Activated CD4-positive, alpha-beta memory T cell treated with anti-CD3 and anti-CD28 coated beads for 36 hours (primary cell): ENCODE measurements at regions of chr11 and their contacts with region 1.

Region 1: GRCh38 chr11:76207642-76208401 is 1.5 kb upstream of the WNT11 start:
- DNase-seq: peak; percentile 81
- H3K4me3 Mint-ChIP-seq: peak overlapping the region; percentile 66
- H3K27ac Mint-ChIP-seq: no peak overlapping the region
- H3K4me1 Mint-ChIP-seq: peaks cover 14% of the 10 kb centered on the region
- H3K27me3 Mint-ChIP-seq: peaks cover 51% of the 10 kb centered on the region

Region 2: GRCh38 chr11:76193219-76193618 is 14.6 kb before region 1 on chr11:
- CTCF ChIA-PET with region 1: interaction called, 21 read pairs
- POLR2A ChIA-PET with region 1: no interaction called
- intact Hi-C with region 1: no loop called
- DNase-seq: no peak
- H3K4me3 Mint-ChIP-seq: no peak overlapping the region
- H3K27ac Mint-ChIP-seq: no peak overlapping the region
- H3K4me1 Mint-ChIP-seq: no peaks in the 10 kb centered on the region
- H3K27me3 Mint-ChIP-seq: no peaks in the 10 kb centered on the region

Region 3: DNA sequence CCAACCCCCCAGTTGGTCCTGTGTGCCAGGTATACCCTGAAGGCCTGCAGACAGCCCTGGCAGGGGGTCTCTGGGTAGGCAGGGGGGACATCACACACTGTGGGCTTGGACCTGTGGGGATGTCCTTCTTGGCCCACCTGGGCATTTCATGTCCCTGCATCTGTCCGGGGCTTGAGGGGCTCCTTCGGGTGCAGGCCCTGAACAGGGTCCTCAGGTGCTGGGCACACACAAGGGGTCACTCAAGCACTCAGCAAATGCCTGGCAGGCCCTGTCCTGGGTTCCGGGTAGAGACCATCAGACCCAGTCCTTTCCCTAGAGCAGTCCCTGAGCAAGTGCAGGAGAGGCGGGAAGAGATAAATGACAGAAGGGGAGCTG is 68.9 kb after region 1 on chr11:
- CTCF ChIA-PET with region 1: no interaction called
- POLR2A ChIA-PET with region 1: no interaction called
- intact Hi-C with region 1: no loop called
- DNase-seq: no peak
- H3K4me3 Mint-ChIP-seq: no peak overlapping the region
- H3K27ac Mint-ChIP-seq: no peak overlapping the region
- H3K4me1 Mint-ChIP-seq: no peaks in the 10 kb centered on the region
- H3K27me3 Mint-ChIP-seq: no peaks in the 10 kb centered on the region

Region 4: DNA sequence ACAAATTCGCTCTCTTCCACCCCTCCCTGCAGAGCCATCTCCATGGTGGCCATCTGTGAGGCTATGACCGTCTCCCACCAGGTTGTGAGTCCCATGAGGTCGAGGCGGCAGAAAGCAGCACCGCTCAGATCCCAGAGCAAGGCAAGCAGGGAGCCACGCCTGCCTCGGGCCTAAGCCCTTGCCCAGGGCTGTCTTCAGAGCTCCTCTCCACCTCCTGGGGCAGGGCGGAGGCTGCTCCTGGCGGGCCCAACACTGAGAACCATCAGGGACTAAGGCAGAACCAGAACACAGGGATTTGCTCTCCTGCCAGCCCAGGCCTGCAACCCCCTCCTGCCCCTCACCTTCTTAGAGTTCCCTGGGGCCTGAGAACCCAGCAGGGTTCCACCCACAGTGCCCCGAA is 79.4 kb after region 1 on chr11:
- CTCF ChIA-PET with region 1: interaction called, 18 read pairs
- POLR2A ChIA-PET with region 1: no interaction called
- intact Hi-C with region 1: no loop called
- DNase-seq: no peak
- H3K4me3 Mint-ChIP-seq: no peak overlapping the region
- H3K27ac Mint-ChIP-seq: no peak overlapping the region
- H3K4me1 Mint-ChIP-seq: peaks cover 21% of the 10 kb centered on the region
- H3K27me3 Mint-ChIP-seq: no peaks in the 10 kb centered on the region

Region 5: GRCh38 chr11:76318744-76319384 is 111.0 kb after region 1 on chr11:
- CTCF ChIA-PET with region 1: interaction called, 241 read pairs
- POLR2A ChIA-PET with region 1: interaction called, 5 read pairs
- intact Hi-C with region 1: loop called (anchors 1 kb)
- DNase-seq: peak; percentile 88
- H3K4me3 Mint-ChIP-seq: no peak overlapping the region
- H3K27ac Mint-ChIP-seq: no peak overlapping the region
- H3K4me1 Mint-ChIP-seq: peaks cover 15% of the 10 kb centered on the region
- H3K27me3 Mint-ChIP-seq: peaks cover 26% of the 10 kb centered on the region

Region 6: GRCh38 chr11:76380967-76381719 is 173.3 kb after region 1 on chr11 and contains the starts of genes GVQW3 and THAP12:
- CTCF ChIA-PET with region 1: interaction called, 3 read pairs
- POLR2A ChIA-PET with region 1: no interaction called
- intact Hi-C with region 1: loop called (anchors 5 kb)
- DNase-seq: peak; percentile 98
- H3K4me3 Mint-ChIP-seq: peak within 1 kb of the TSS; percentile 87
- H3K27ac Mint-ChIP-seq: peak within 1 kb of the TSS; percentile 89
- H3K4me1 Mint-ChIP-seq: peaks cover 57% of the 10 kb centered on the region
- H3K27me3 Mint-ChIP-seq: no peaks in the 10 kb centered on the region
- total RNA-seq, gene GVQW3: 2.3 to 3.3 TPM
- total RNA-seq, gene THAP12: 46.2 to 49.2 TPM

Region 7: GRCh38 chr11:76469141-76469540 is 261.3 kb after region 1 on chr11:
- CTCF ChIA-PET with region 1: no interaction called
- POLR2A ChIA-PET with region 1: no interaction called
- intact Hi-C with region 1: no loop called
- DNase-seq: no peak
- H3K4me3 Mint-ChIP-seq: no peak overlapping the region
- H3K27ac Mint-ChIP-seq: no peak overlapping the region
- H3K4me1 Mint-ChIP-seq: no peaks in the 10 kb centered on the region
- H3K27me3 Mint-ChIP-seq: no peaks in the 10 kb centered on the region

Region 8: GRCh38 chr11:76512851-76513653 is 305.2 kb after region 1 on chr11:
- CTCF ChIA-PET with region 1: interaction called, 16 read pairs
- POLR2A ChIA-PET with region 1: no interaction called
- intact Hi-C with region 1: no loop called
- DNase-seq: no peak
- H3K4me3 Mint-ChIP-seq: no peak overlapping the region
- H3K27ac Mint-ChIP-seq: no peak overlapping the region
- H3K4me1 Mint-ChIP-seq: no peaks in the 10 kb centered on the region
- H3K27me3 Mint-ChIP-seq: no peaks in the 10 kb centered on the region